GM10248 (cell line): ENCODE measurements at regions of chr15 and their contacts with region 1.

Region 1: DNA sequence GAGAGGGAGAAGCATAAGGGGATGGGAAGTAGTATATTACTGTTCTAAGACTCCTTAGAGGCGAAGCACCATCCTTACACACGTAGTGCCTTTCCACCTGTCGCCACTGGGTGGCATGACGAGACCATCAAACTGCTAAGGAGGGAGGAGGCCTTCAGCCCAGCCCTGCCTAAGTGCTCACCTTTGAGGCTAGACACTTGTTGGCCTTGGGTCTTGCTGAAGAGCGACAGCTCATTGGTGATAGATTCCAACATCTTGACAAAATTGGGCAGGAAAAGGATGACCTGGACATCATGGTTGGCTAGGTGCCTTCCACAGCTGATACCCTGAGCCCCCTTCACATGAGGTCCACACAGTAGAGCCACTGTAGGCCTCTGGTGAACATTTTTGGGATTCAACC is 19.6 kb downstream of the CLK3 start:
- DNase-seq: peak; percentile 77
- CTCF ChIP-seq: peak; percentile 86

Region 2: DNA sequence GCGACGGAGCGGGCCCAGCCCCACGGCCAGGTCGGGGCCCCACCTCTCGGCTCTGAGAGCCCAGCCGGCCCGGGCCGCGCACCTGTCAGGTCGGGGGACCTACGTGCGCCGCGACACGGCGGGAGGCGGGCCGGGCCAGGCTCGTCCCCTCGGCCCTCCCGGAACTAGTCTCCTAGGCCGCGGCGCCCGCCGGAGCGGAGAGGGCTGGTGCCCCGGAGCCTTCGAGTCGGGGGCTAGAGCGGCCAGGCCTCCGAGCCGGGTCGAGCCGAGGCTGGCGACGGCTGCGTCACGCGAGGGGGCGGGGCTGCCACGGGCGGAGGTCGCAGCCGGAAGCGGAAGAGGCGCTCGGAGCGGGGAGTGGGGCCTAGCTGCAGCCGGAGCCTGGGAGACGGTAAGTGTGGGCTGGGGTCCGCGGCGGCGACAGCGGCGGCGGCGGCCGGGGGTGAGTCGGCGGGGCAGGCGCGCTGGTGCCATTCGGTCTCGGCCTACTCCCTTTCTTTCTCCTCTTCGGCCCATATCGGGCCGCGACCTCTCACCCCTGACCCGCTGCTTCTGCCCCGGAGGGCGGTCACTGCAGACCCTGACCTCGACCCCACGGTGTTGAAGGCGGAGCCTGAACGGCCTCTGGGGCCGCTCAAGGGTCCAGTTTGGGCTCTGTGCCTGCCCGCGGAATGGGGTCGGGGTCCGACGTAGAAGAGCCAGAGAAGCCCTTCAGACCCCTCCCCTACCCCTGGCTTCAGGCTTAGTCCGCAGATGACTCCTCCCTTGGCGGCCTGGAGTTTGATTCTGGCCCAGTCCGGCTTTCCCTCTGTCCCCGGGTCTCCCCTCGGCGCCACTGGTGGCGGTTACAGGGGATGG is 19.5 kb before region 1 on chr15 and contains the start of gene CLK3:
- CTCF ChIA-PET with region 1: interaction called, 246 read pairs
- POLR2A ChIA-PET with region 1: interaction called, 4 read pairs
- DNase-seq: peak; percentile 99
- CTCF ChIP-seq: no peak

Region 3: GRCh38 chr15:74680456-74680855 is 45.2 kb after region 1 on chr15:
- CTCF ChIA-PET with region 1: interaction called, 12 read pairs
- POLR2A ChIA-PET with region 1: no interaction called
- DNase-seq: no peak
- CTCF ChIP-seq: no peak

Region 4: GRCh38 chr15:74763416-74763815 is 128.2 kb after region 1 on chr15:
- CTCF ChIA-PET with region 1: interaction called, 690 read pairs
- POLR2A ChIA-PET with region 1: interaction called, 4 read pairs
- DNase-seq: no peak
- CTCF ChIP-seq: no peak

Region 5: GRCh38 chr15:74793135-74794028 is 158.2 kb after region 1 on chr15:
- CTCF ChIA-PET with region 1: interaction called, 76 read pairs
- POLR2A ChIA-PET with region 1: no interaction called
- DNase-seq: no peak
- CTCF ChIP-seq: peak; percentile 63

Region 6: DNA sequence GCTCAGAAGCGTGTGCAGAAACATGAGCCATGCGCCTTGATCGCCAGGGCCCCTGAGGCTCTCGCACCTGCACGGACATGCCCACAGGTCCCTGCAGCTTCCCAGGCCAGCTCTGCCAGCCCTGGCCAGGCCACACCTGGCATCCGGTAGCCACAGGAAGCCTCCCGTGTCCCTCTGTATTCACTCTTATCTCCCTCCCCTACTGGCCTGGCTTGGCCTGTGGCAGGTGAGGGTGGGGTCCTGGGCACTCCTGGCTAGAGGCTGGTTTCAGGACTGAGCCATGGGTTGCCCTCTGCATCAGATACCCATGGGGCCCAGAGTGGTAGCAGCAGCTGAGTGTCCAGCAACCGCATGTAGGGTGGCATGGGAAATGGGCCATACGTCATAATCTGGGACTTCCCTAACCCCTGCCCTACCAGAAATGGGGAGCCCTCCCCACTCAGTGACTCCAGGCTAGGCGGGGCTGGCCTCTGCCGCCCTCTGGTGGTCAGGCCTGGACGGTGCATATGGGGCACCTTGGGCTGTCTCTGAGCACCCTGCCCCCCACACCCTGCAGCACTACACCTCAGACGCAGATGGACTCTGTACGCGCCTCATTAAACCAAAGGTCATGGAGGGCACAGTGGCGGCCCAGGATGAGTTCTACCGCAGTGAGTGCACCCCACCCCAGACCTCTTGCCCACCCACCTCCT is 164.8 kb after region 1 on chr15:
- CTCF ChIA-PET with region 1: interaction called, 76 read pairs
- POLR2A ChIA-PET with region 1: no interaction called
- DNase-seq: peak; percentile 95
- CTCF ChIP-seq: peak; percentile 97